Heart left ventricle (tissue), 16 donors: ENCODE measurements at regions of chr19 and their contacts with region 1.

Region 1: GRCh38 chr19:18846862-18847548 is 15.2 kb downstream of the UPF1 start:
- DNase-seq: peak; percentile 75 to 91 (median 80)
- ATAC-seq: peak; percentile 73 to 79 (median 78)
- H3K4me3 ChIP-seq: no peak overlapping the region
- H3K27ac ChIP-seq: peak overlapping the region in 10 of 12 donors; percentile 3 to 86 (median 81)
- H3K4me1 ChIP-seq: peaks cover 28 to 87% (median 68%) of the 10 kb centered on the region in 12 donors
- H3K27me3 ChIP-seq: no peaks in the 10 kb centered on the region
- CTCF ChIP-seq: peak; percentile 76 to 94 (median 87)
- POLR2A ChIP-seq: no peak

Region 2: GRCh38 chr19:18440415-18440877 is 406.6 kb before region 1 on chr19:
- intact Hi-C with region 1: loop called in 1 of 10 experiments (anchors 10 kb)
- DNase-seq: no peak
- ATAC-seq: no peak
- H3K4me3 ChIP-seq: no peak overlapping the region
- H3K27ac ChIP-seq: no peak overlapping the region
- H3K4me1 ChIP-seq: peaks cover 0 to 37% (median 24%) of the 10 kb centered on the region in 12 donors
- H3K27me3 ChIP-seq: no peaks in the 10 kb centered on the region
- CTCF ChIP-seq: peak in 5 of 12 donors; percentile 17 to 33 (median 28)
- POLR2A ChIP-seq: no peak

Region 3: GRCh38 chr19:18456974-18457373 is 390.0 kb before region 1 on chr19:
- intact Hi-C with region 1: loop called in 7 of 10 experiments (anchors 5 to 10 kb)
- DNase-seq: peak in 2 of 5 donors; percentile 76 to 82
- ATAC-seq: peak in 3 of 4 donors; percentile 30 to 49 (median 39)
- H3K4me3 ChIP-seq: no peak overlapping the region
- H3K27ac ChIP-seq: peak overlapping the region in 9 of 12 donors; percentile 5 to 93 (median 42)
- H3K4me1 ChIP-seq: peaks cover 17 to 49% (median 36%) of the 10 kb centered on the region in 12 donors
- H3K27me3 ChIP-seq: no peaks in the 10 kb centered on the region
- CTCF ChIP-seq: no peak
- POLR2A ChIP-seq: no peak

Region 4: GRCh38 chr19:18478569-18479311 is 368.3 kb before region 1 on chr19:
- intact Hi-C with region 1: loop called in 1 of 10 experiments (anchors 10 kb)
- DNase-seq: peak; percentile 81 to 89 (median 87)
- ATAC-seq: peak; percentile 57 to 85 (median 79)
- H3K4me3 ChIP-seq: peak overlapping the region in 1 of 12 donors; percentile 21
- H3K27ac ChIP-seq: peak overlapping the region; percentile 35 to 98 (median 78)
- H3K4me1 ChIP-seq: peaks cover 12 to 93% (median 54%) of the 10 kb centered on the region in 12 donors
- H3K27me3 ChIP-seq: no peaks in the 10 kb centered on the region
- CTCF ChIP-seq: no peak
- POLR2A ChIP-seq: no peak

Region 5: DNA sequence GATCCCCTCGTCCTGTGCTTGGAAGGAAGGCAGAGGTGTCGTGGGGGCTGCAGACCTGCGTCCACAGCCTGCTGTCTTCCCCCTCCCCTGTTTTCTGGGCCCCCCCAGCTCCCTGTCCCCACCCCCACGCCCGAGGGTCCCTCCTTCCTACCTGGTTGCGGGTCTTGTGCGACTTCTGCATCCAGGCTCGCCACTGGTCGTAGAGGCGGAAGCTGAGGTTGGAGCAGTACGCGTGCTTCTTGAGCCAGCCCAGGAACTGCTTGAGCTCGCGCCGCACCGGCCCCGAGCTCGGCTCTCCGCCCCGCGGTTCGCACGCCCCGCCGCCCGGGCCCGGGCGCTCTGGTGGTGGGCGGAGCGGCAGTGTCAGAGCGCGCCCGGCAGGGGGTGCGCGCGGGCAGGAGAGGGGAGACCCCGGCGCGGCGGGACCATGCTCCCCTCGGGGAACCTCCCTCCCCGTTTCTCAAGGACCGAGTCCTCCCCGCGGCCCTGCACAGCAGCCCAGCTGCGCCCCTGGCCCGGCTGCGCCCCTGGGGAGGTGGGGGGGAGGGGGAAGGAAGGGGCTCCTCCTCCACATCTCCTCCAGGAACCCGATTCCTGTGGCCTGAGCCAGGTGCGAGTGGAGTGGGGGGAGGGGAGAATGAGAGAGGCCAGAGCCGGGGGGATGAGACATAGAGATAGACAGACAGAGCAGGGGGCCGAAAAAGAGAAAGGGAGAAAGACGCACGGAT is 252.7 kb before region 1 on chr19:
- intact Hi-C with region 1: loop called in 9 of 10 experiments (anchors 1 to 5 kb)
- DNase-seq: peak; percentile 68 to 87 (median 73)
- ATAC-seq: peak; percentile 44 to 72 (median 65)
- H3K4me3 ChIP-seq: peak overlapping the region in 11 of 12 donors; percentile 12 to 54 (median 46)
- H3K27ac ChIP-seq: peak overlapping the region in 6 of 12 donors; percentile 13 to 63 (median 28)
- H3K4me1 ChIP-seq: peaks cover 4 to 39% (median 27%) of the 10 kb centered on the region in 12 donors
- H3K27me3 ChIP-seq: peaks cover 0 to 30% (median 15%) of the 10 kb centered on the region in 9 donors
- CTCF ChIP-seq: peak; percentile 49 to 94 (median 89)
- POLR2A ChIP-seq: peak in 1 of 2 donors; percentile 33

Region 6: DNA sequence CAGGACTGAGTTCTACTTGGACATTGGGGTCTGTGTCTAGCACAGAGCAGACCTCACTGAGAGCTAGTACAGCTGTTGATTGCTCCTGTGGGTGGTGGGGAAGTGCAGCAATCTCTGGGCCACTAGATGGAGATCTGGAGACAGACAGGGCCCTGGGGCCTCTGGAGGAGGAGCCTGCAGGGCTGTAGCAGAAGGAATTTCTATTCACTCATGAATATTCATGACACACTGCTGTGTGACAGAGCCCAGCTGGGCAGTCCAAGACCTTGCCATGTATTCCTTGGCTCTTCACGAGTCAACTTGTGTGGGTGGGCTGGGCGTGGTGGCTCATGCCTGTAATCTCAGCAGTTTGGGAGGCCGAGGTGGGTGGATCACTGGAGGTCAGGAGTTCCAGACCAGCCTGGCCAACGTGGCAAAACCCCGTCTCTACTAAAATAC is 148.8 kb after region 1 on chr19:
- intact Hi-C with region 1: no loop called
- DNase-seq: peak in 4 of 5 donors; percentile 44 to 83 (median 64)
- ATAC-seq: peak; percentile 46 to 90 (median 80)
- H3K4me3 ChIP-seq: no peak overlapping the region
- H3K27ac ChIP-seq: no peak overlapping the region
- H3K4me1 ChIP-seq: peaks cover 0 to 13% (median 3%) of the 10 kb centered on the region in 12 donors
- H3K27me3 ChIP-seq: no peaks in the 10 kb centered on the region
- CTCF ChIP-seq: peak in 8 of 12 donors; percentile 12 to 37 (median 25)
- POLR2A ChIP-seq: no peak